ENCODE measurements at regions of chr6 and their contacts with region 1.

Region 1: GRCh38 chr6:109187399-109188114 is 92.2 kb downstream of the CEP57L1 start:
- DNase-seq: peak; percentile 72

Region 2: DNA sequence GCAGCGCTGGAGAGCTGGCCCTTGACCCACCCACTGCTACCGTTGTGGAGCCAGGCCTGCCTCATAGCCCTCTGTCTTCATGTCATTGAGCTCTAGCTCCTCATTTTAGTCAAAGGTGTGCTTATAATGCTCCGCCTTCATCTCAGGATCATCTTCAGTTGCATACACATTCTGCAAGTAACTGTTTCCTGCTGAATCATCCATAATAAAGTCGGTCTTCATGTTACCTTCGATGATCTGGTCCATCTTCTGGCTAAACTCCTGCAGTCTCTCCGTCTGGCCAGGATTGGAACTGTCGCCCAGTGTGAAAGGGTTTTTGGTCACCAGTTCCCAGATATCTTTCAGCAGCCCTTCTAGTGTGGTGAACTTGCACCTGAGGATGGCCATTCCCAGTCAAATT is 401.9 kb before region 1 on chr6:
- in situ Hi-C with region 1: no loop called
- DNase-seq: no peak

Region 3: GRCh38 chr6:108947114-108947854 is 240.3 kb before region 1 on chr6:
- in situ Hi-C with region 1: no loop called
- DNase-seq: peak; percentile 68

Region 4: DNA sequence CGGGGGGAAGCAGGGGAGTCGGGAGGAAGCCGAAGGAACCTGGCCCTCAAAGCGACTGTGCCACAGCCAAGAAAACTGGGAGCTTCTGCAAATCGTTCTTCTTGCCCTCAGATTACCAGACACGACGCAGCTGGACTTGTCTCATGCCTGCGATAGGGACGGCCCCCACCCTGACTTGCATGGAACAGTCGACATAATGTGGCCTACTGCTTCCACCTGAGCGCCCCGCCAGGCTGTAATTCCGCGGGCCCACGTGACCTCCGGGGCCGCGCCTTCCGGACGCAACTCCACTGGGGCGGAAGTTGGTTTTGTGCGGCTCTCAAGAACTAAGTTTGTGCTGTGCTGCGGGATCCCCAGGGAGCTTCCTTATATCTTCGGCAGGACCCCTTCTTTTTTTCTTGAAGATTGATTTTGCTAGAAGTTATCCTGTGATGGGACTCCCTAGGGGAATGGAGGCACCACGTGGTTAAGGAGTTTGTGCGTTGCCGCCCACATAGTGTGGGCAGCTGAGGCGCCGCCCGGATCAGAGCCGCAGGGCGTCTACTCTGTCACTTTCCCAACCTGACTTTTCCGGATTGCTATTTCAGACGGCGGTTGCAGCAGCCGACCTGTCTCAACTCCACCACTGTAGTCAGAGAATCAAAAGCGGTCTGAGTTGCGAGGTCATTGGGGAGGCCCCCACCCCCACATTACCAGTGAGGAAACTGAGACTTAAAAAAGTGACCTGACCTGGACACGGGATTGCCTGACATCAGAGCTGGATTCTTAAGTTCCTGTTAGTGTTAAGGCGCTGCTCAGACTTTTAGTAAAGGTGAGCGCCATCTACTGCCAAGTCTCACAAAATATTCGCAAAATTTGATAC is 195.2 kb after region 1 on chr6:
- in situ Hi-C with region 1: loop called (anchors 25 kb)
- DNase-seq: peak; percentile 98

Measured in KBM-7 (cell line).